ENCODE measurements at regions of chr3 and their contacts with region 1.

Region 1: GRCh38 chr3:193665370-193665989 is 72.5 kb downstream of the OPA1 start:
- DNase-seq: peak; percentile 18
- H3K4me3 ChIP-seq: no peak overlapping the region
- H3K27ac ChIP-seq: no peak overlapping the region
- H3K4me1 ChIP-seq: no peaks in the 10 kb centered on the region
- H3K27me3 ChIP-seq: no peaks in the 10 kb centered on the region
- CTCF ChIP-seq: peak; percentile 29 to 34

Region 2: DNA sequence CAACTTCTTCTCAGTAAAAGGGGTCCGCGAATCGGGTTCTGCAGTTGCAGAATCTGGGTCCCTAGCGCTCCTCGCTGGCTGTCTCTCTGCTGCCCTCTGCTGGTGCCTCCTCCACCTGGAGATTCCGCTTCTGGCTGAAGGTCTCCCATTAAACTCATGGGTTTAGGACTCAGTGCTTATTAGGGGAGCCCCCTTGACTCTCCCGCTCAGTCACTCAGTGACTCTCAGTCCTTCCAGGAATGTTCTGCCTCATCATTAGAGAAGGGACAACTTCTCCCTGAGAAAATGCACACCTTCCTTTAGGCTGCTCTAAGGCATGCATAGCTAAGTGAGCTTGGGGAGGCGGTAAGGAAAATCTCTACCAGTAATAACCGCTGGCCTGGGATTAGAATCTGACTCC is 678.5 kb after region 1 on chr3:
- CTCF ChIA-PET with region 1: no interaction called
- dilution Hi-C with region 1: no loop called
- in situ Hi-C with region 1: no loop called
- intact Hi-C with region 1: loop called (anchors 1 kb)
- DNase-seq: peak; percentile 32
- H3K4me3 ChIP-seq: no peak overlapping the region
- H3K27ac ChIP-seq: no peak overlapping the region
- H3K4me1 ChIP-seq: no peaks in the 10 kb centered on the region
- H3K27me3 ChIP-seq: no peaks in the 10 kb centered on the region
- CTCF ChIP-seq: peak; percentile 95 to 98

Region 3: DNA sequence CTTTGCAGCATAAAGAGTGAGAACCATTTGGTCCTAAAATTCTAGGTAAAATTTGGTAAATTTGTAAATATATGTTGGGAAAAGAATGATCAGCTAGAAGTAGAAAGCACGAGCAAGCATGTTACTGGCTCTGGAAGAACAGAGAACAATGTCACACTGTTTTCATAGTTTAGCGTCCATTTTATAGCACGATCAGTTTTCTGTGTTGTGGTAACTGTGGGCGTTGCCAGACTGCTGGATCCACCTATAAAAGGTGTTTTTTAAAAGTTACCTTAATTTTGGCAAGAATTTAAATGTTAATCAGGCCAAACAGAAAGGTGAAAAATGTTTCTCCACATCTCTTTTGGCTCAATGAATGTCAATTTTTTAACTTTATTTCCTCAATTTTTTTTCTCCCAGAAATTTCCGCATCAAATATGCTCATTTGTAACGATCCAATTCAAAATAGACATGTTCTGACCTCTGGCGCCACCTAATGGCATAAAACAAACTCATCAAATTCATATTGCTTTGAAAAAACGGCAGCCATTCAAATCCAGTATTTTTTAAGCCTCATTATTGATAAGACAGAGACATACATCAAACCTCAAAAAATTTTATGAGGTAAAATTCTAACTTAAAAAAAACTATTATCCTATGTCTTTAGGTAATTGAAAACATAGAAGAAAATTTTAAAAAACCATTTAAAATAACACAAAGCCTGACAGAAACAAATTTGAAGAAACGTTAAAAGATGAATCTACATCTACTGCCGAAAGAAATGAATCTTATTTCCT is 739.1 kb after region 1 on chr3:
- CTCF ChIA-PET with region 1: no interaction called
- dilution Hi-C with region 1: no loop called
- in situ Hi-C with region 1: loop called in 1 of 2 experiments (anchors 25 kb)
- intact Hi-C with region 1: loop called (anchors 1 kb)
- DNase-seq: peak; percentile 29
- H3K4me3 ChIP-seq: no peak overlapping the region
- H3K27ac ChIP-seq: no peak overlapping the region
- H3K4me1 ChIP-seq: no peaks in the 10 kb centered on the region
- H3K27me3 ChIP-seq: no peaks in the 10 kb centered on the region
- CTCF ChIP-seq: peak; percentile 64 to 69

Region 4: DNA sequence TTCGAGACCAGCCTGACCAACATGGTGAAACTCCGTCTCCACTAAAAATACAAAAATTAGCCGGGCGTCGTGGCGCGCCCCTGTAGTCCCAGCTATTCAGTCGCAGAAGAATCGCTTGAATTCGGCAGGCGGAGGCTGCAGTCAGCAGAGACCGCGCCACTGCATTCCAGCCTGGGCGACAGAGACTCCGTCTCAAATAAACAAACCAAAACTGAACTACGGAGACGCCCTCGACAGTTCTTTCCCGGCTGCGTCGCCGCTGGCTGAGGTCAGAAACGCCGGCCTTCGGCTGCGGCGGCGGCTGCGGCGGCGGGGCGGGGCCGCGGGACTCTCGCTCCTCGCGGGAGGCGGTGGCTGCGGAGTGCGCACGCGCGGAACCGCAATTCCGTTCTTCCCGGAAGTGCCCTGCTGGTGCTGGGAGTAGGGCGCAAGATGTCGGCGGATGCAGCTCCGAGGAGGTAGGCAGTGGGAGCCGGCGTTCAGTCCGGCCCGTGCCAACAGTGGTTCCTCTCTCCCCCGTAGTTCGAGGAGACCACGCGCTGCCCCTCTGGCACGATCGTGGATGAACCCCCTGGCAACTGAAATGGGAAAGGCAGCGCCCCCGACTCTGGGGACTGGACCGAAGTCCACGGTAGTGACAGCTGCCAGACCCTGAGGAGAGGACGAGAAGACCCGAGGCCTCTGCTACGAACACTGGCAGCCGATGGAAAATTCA is 918.3 kb after region 1 on chr3:
- CTCF ChIA-PET with region 1: interaction called, 10 read pairs
- dilution Hi-C with region 1: no loop called
- in situ Hi-C with region 1: no loop called
- intact Hi-C with region 1: no loop called
- DNase-seq: peak; percentile 86
- H3K4me3 ChIP-seq: peak overlapping the region; percentile 85 to 88 (median 87)
- H3K27ac ChIP-seq: peak overlapping the region; percentile 82
- H3K4me1 ChIP-seq: peaks cover 5% of the 10 kb centered on the region
- H3K27me3 ChIP-seq: no peaks in the 10 kb centered on the region
- CTCF ChIP-seq: no peak